ENCODE measurements at regions of chr2 and their contacts with region 1.

Region 1: DNA sequence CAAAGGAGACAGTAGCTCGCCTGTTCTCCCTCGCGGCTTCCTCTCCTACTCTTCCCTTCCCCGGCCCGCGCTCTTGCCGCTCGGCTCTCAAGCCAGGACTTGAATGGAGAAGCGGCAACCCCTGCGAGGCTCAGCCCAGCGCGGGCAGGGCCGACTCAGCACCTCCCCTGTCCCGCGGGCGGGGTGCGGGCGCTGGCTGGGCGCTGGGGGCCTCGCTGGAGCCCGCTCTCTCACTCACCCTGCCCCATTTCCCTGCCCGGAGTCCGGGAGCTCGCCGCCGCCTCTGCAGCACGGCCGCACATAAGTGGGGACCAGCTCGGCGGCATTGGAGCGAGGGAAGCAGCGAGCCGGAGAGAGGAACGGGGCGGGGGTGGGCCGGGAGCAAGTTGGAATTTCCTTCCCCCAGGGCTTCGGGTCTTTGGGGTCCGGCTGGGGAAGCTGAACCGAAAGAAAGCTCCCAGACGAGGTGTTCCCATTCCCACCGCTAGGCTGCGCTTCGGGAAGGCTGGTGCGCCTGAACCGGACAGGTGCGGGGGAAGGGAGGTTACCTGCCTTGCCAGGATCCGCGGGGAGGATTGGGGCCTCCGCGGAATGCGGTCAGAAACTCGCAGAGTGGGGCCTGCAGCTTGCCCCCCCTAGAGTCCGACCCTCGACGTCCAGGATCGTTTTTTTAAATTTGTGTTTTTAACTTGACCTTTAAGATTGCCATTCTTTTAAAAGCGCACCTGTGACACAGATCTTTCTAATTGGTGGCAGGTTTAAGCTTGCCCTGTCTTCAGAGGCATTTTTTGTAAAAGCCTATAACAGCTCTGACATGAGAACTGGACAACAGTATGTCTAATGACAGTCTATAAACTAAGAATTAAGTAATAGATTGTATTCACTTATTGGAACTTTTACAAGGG is at the start of gene COBLL1:
- DNase-seq: peak; percentile 78
- H3K4me3 ChIP-seq: peak within 1 kb of the TSS; percentile 48 to 84 (median 80)
- H3K27ac ChIP-seq: peak within 1 kb of the TSS; percentile 74
- H3K4me1 ChIP-seq: peaks cover 19% of the 10 kb centered on the region
- H3K27me3 ChIP-seq: no peaks in the 10 kb centered on the region
- CTCF ChIP-seq: peak; percentile 71 to 85
- POLR2A ChIP-seq: no peak
- total RNA-seq, gene COBLL1: 38.2 and 38.4 TPM in 2 replicates

Region 2: DNA sequence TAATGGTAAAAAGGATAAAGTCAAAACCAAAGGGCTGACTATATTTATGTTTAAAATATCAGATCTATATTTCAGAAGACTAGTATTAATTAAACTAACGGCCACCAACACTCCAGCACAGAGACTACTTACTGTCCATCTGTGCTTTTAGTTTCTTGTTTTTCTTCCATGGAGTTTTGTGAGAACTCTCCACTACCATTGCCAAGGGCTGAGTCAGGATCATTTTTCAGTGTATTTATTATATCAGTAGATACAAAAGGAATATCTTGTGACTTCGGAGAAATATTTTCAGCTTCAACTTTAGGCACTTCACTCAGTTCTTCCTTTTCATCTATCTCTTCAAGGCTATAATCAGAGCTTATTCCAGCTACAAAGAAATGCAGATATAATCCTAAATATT is 141.6 kb before region 1 on chr2:
- CTCF ChIA-PET with region 1: no interaction called
- POLR2A ChIA-PET with region 1: no interaction called
- dilution Hi-C with region 1: no loop called
- intact Hi-C with region 1: no loop called
- DNase-seq: no peak
- H3K4me3 ChIP-seq: no peak overlapping the region
- H3K27ac ChIP-seq: no peak overlapping the region
- H3K4me1 ChIP-seq: peaks cover 4% of the 10 kb centered on the region
- H3K27me3 ChIP-seq: no peaks in the 10 kb centered on the region
- CTCF ChIP-seq: no peak
- POLR2A ChIP-seq: no peak

Region 3: DNA sequence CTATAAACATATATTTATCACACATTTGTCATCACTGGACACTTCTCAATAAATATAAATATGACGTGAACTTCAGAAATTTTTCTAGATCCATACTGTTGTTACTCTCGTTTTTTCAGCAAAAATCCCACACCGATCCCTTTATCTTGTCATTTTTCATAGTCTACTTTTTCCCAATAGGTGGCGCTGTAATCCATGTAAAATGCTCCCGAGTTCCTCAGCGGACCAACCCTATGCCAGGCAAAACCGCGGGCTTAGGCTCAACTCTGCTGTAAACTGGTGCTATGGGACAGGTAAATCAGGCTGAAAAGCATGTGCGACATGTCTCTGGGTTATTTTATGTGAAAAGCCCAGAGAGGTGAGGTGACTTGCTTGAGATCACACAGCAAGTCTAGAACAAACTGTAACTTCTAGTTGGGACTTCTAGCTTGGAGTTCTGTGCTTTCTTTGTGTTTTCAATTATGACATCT is 104.3 kb before region 1 on chr2:
- CTCF ChIA-PET with region 1: interaction called, 48 read pairs
- POLR2A ChIA-PET with region 1: no interaction called
- dilution Hi-C with region 1: no loop called
- intact Hi-C with region 1: loop called (anchors 1 kb)
- DNase-seq: peak; percentile 82
- H3K4me3 ChIP-seq: no peak overlapping the region
- H3K27ac ChIP-seq: no peak overlapping the region
- H3K4me1 ChIP-seq: peaks cover 8% of the 10 kb centered on the region
- H3K27me3 ChIP-seq: no peaks in the 10 kb centered on the region
- CTCF ChIP-seq: peak; percentile 48 to 61
- POLR2A ChIP-seq: no peak

Region 4: DNA sequence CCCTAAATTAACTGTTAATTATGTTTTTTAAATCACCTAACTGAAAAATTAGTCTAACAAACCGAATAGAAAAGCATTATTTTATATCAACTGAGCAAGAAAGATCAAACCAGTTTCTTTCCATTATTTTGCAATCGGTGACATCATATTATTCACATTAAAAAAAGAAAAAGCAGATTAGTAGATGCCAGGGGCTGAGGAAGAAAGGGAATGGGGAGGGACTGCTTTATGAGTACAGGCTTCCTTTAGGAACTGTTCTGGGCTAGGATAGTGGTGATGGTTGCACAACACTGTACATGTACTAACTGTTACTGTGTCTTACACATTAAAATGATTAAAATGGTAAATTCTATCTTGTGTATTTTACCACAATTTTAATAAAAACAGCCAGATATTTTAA is 59.6 kb before region 1 on chr2:
- CTCF ChIA-PET with region 1: interaction called, 27 read pairs
- POLR2A ChIA-PET with region 1: interaction called, 3 read pairs
- dilution Hi-C with region 1: no loop called
- intact Hi-C with region 1: loop called (anchors 1 kb)
- DNase-seq: peak; percentile 54
- H3K4me3 ChIP-seq: no peak overlapping the region
- H3K27ac ChIP-seq: no peak overlapping the region
- H3K4me1 ChIP-seq: peaks cover 42% of the 10 kb centered on the region
- H3K27me3 ChIP-seq: no peaks in the 10 kb centered on the region
- CTCF ChIP-seq: no peak
- POLR2A ChIP-seq: no peak

Region 5: GRCh38 chr2:164808776-164809175 is 33.2 kb before region 1 on chr2:
- CTCF ChIA-PET with region 1: interaction called, 10 read pairs
- POLR2A ChIA-PET with region 1: no interaction called
- dilution Hi-C with region 1: no loop called
- intact Hi-C with region 1: no loop called
- DNase-seq: peak; percentile 65
- H3K4me3 ChIP-seq: no peak overlapping the region
- H3K27ac ChIP-seq: no peak overlapping the region
- H3K4me1 ChIP-seq: no peaks in the 10 kb centered on the region
- H3K27me3 ChIP-seq: no peaks in the 10 kb centered on the region
- CTCF ChIP-seq: no peak
- POLR2A ChIP-seq: no peak

Region 6: DNA sequence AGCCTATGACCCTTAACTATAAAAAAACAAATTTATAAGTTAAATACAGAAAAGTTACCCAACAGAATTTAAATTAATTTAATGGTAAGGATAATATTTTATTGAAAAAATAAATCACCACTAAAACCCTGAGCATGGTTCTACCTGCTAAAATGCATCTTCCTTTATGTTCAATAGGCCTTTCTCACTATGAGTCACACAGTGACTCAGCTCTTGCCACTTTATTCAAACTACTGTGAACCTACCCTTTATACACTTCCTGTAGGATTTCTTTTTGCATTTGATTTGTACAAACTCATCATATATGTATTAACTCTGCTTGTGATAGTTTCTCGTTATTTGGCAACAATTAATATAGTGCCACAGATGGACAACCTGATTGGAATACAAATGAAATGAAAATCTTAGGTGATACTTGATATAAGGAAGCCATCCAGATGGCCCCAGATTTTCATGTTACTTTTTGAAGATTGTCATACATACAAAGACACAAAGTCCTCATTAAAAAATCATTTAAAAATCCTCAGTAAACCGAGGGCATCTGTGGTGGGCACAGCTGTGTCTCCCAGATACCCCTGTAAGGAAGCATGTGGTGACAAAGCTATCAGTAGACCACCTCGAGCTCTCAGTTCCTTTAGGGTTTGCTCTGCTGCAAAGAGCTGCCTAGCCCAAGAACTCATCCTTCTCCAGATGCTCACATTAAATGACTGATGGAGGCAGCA is 54.8 kb after region 1 on chr2:
- CTCF ChIA-PET with region 1: interaction called, 32 read pairs
- POLR2A ChIA-PET with region 1: no interaction called
- dilution Hi-C with region 1: no loop called
- intact Hi-C with region 1: loop called (anchors 5 kb)
- DNase-seq: peak; percentile 82
- H3K4me3 ChIP-seq: no peak overlapping the region
- H3K27ac ChIP-seq: no peak overlapping the region
- H3K4me1 ChIP-seq: peaks cover 24% of the 10 kb centered on the region
- H3K27me3 ChIP-seq: no peaks in the 10 kb centered on the region
- CTCF ChIP-seq: no peak
- POLR2A ChIP-seq: no peak

Region 7: DNA sequence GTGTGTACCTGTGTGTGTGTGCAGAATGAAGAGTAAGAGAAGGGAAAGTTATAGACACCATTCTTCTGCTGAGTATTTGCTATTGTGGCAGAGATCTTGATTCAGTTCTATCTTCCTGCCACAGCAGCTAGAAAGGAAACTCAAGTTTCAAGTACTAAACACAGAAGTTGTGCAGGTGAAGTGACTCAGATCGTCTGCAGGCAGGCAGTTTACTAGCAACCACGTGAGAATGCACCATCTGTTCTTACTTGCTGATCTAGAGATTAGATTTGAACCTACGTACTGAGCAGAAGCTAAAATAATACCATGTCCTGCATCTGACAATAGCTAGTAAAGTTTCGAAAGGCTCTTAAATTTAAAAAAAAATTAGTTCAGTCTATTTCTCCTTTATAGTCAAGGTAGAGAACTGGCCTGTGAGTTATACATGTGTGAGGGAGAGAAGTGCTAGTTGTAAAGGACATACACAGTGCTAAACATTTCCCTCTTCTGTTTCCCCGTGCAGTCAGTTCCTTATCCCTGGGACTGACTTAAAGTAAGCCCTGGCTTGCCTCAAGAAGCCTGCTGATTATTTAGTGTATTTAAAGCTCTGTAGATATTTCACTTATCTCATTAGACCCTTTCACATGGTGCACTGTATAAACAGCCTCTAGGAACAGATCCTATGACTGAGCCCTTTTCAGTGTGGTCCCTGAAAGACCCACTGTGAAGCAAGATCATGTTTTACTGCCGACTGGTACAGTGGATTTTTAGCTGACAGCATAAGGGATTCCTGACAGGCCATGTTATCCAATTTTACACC is 68.3 kb after region 1 on chr2:
- CTCF ChIA-PET with region 1: interaction called, 34 read pairs
- POLR2A ChIA-PET with region 1: no interaction called
- dilution Hi-C with region 1: no loop called
- intact Hi-C with region 1: loop called (anchors 1 kb)
- DNase-seq: peak; percentile 88
- H3K4me3 ChIP-seq: no peak overlapping the region
- H3K27ac ChIP-seq: peak overlapping the region; percentile 38
- H3K4me1 ChIP-seq: peaks cover 45% of the 10 kb centered on the region
- H3K27me3 ChIP-seq: no peaks in the 10 kb centered on the region
- CTCF ChIP-seq: no peak
- POLR2A ChIP-seq: no peak

Region 8: GRCh38 chr2:164992818-164993217 is 150.8 kb after region 1 on chr2:
- CTCF ChIA-PET with region 1: interaction called, 12 read pairs
- POLR2A ChIA-PET with region 1: no interaction called
- dilution Hi-C with region 1: no loop called
- intact Hi-C with region 1: loop called (anchors 5 kb)
- DNase-seq: peak; percentile 71
- H3K4me3 ChIP-seq: no peak overlapping the region
- H3K27ac ChIP-seq: no peak overlapping the region
- H3K4me1 ChIP-seq: no peaks in the 10 kb centered on the region
- H3K27me3 ChIP-seq: no peaks in the 10 kb centered on the region
- CTCF ChIP-seq: peak; percentile 19 to 22
- POLR2A ChIP-seq: no peak

Measured in endothelial cell of umbilical vein (primary cell).